Activated naive CD4-positive, alpha-beta T cell treated with anti-CD3 and anti-CD28 coated beads for 36 hours (primary cell): ENCODE measurements at regions of chr3 and their contacts with region 1.

Region 1: DNA sequence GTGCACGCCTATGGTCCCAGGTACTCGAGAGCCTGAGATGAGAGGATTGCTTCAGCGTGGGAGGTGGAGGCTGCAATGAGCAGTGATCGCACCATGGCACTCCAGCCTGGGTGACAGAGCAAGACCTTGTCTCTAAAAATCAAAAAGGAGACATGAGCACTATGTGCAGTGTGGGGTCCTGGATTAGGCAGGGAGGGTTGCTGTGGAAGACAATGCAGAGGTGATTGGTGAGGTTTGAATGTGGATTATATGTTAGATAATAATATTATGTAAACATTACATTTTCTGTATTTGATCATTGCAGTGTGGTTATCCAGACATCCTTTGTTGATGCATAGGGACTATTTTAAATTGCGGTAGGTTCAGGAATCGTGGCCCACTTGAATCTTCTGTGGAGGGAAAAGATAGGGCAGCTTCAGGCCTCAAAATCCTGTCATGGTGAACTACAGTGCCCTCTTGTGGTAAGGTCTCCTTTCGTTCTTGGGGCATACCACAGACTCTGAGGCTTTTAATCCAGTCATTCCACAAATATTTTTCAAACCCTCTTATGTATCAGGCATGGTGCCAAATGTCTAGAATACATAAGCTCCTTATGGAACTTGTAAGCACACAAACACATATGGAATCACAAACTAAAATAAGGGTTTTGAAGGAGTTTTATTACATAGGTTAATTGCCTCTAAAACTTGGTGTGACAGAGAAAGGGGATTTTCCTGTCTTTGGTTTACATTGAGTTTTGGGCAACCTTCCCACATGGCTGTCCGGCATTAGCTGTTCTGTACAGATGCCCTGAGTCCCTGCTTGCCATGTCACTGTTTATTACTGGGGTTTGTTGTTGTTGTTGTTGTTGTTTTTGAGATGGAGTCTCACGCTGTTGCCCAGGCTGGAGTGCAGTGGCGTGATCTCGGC is 37.7 kb downstream of the GPD1L start:
- DNase-seq: peak; percentile 69
- H3K4me3 Mint-ChIP-seq: no peak overlapping the region
- H3K27ac Mint-ChIP-seq: no peak overlapping the region
- H3K4me1 Mint-ChIP-seq: peaks cover under 1% of the 10 kb centered on the region
- H3K27me3 Mint-ChIP-seq: no peaks in the 10 kb centered on the region

Region 2: GRCh38 chr3:31550452-31551251 is 593.5 kb before region 1 on chr3:
- CTCF ChIA-PET with region 1: no interaction called
- intact Hi-C with region 1: loop called (anchors 5 kb)
- DNase-seq: peak; percentile 32
- H3K4me3 Mint-ChIP-seq: no peak overlapping the region
- H3K27ac Mint-ChIP-seq: peak overlapping the region; percentile 48
- H3K4me1 Mint-ChIP-seq: peaks cover 77% of the 10 kb centered on the region
- H3K27me3 Mint-ChIP-seq: no peaks in the 10 kb centered on the region

Region 3: GRCh38 chr3:31610700-31611275 is 533.3 kb before region 1 on chr3:
- CTCF ChIA-PET with region 1: no interaction called
- intact Hi-C with region 1: loop called (anchors 5 kb)
- DNase-seq: peak; percentile 31
- H3K4me3 Mint-ChIP-seq: no peak overlapping the region
- H3K27ac Mint-ChIP-seq: no peak overlapping the region
- H3K4me1 Mint-ChIP-seq: peaks cover 60% of the 10 kb centered on the region
- H3K27me3 Mint-ChIP-seq: no peaks in the 10 kb centered on the region

Region 4: DNA sequence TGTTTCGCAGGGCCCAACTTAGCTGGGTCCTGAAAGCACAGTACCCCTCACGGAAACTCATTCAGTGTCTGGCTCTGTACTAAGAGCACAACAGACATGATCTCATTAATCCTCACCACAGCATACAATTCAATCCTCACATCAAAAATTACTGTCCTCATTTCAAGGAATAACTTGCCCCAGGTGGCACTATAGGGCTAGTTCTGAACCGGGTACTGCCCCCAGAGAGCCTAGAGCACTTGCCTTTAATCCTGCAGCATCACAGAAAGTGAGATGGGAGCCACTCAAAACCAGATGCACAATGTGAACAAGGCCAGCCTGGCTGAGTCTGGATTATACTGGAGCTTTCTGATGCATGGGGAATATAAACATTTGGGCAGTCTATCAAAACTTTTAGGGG is 285.7 kb before region 1 on chr3:
- CTCF ChIA-PET with region 1: no interaction called
- intact Hi-C with region 1: loop called (anchors 5 kb)
- DNase-seq: peak; percentile 14
- H3K4me3 Mint-ChIP-seq: no peak overlapping the region
- H3K27ac Mint-ChIP-seq: no peak overlapping the region
- H3K4me1 Mint-ChIP-seq: no peaks in the 10 kb centered on the region
- H3K27me3 Mint-ChIP-seq: peaks cover 7% of the 10 kb centered on the region

Region 5: GRCh38 chr3:32018757-32019564 is 125.1 kb before region 1 on chr3:
- CTCF ChIA-PET with region 1: interaction called, 47 read pairs
- intact Hi-C with region 1: loop called (anchors 1 kb)
- DNase-seq: no peak
- H3K4me3 Mint-ChIP-seq: no peak overlapping the region
- H3K27ac Mint-ChIP-seq: no peak overlapping the region
- H3K4me1 Mint-ChIP-seq: no peaks in the 10 kb centered on the region
- H3K27me3 Mint-ChIP-seq: peaks cover 2% of the 10 kb centered on the region

Region 6: GRCh38 chr3:32238453-32239306 is 94.6 kb after region 1 on chr3 and contains the start of gene CMTM8:
- CTCF ChIA-PET with region 1: no interaction called
- intact Hi-C with region 1: no loop called
- DNase-seq: peak; percentile 70
- H3K4me3 Mint-ChIP-seq: peak within 1 kb of the TSS; percentile 82
- H3K27ac Mint-ChIP-seq: no peak within 1 kb of the TSS
- H3K4me1 Mint-ChIP-seq: peaks cover 32% of the 10 kb centered on the region
- H3K27me3 Mint-ChIP-seq: peaks cover 2% of the 10 kb centered on the region
- total RNA-seq, gene CMTM8: 16.0 to 19.1 TPM